ENCODE measurements at regions of chr12 and their contacts with region 1.

Region 1: GRCh38 chr12:11202811-11203210 is 16.1 kb upstream of the TAS2R42 start:
- DNase-seq: no peak
- ATAC-seq: no peak
- H3K4me3 ChIP-seq: no peak overlapping the region
- H3K4me3 Mint-ChIP-seq: no peak overlapping the region
- H3K27ac ChIP-seq: no peak overlapping the region
- H3K27ac Mint-ChIP-seq: no peak overlapping the region
- H3K4me1 ChIP-seq: no peaks in the 10 kb centered on the region
- H3K4me1 Mint-ChIP-seq: peaks cover 0 to 3% (median 0%) of the 10 kb centered on the region in 7 donors
- H3K27me3 ChIP-seq: no peaks in the 10 kb centered on the region
- H3K27me3 Mint-ChIP-seq: peaks cover 0 to 10% (median 0%) of the 10 kb centered on the region in 5 donors

Region 2: DNA sequence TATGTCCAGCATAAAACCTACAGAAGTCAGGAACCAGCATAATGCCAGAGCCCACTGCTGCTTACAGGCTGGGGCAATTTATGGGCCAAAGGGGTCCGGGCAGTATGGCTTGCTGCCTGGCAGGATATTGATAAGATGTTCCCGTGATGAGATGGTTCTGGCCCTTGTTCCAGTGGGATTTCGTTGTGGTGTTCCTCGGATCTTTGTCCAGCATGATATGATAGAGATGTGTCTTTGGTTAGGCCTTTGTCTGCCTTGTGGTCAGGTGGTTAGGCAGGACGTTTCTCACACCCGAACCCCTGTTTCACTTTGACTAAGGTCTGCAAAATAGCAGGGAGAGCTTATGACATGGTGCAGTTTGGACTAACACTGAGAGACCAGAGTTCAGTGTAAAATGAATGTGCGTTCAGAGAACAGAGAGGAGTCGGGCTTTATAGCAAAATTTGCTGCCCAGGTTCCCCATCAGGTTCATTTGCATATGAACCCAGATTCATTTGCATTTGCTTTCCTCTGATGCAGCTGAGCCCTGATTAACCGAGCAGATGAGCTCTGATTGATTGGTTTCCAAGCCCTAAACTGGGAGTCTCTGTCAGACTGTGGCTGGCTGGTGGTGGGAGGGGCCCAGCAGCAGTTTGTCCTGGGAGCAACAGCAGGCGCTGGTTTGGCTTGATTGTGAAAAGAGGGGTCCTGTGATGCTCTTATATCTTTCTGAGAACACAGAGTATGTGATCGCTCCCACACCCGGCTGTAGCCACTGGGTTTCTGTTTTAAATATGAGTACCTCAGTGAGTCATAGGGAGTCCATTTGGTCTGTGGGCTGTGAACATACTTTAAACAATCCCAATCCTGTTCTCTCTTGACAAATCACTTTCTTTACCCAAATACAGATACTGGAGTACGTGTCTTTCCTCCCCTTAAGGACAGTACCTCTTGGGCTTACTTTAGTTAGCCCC is 1838.3 kb before region 1 on chr12:
- CTCF ChIA-PET with region 1: no interaction called
- POLR2A ChIA-PET with region 1: no interaction called
- intact Hi-C with region 1: no loop called
- DNase-seq: peak in 1 of 9 donors; percentile 58
- ATAC-seq: peak; percentile 54
- H3K4me3 ChIP-seq: no peak overlapping the region
- H3K4me3 Mint-ChIP-seq: peak overlapping the region in 5 of 10 donors; percentile 1 to 66 (median 9)
- H3K27ac ChIP-seq: no peak overlapping the region
- H3K27ac Mint-ChIP-seq: peak overlapping the region in 1 of 9 donors; percentile 64
- H3K4me1 ChIP-seq: peaks cover 0 to 8% of the 10 kb centered on the region in 2 donors
- H3K4me1 Mint-ChIP-seq: peaks cover 18 to 36% (median 22%) of the 10 kb centered on the region in 7 donors
- H3K27me3 ChIP-seq: no peaks in the 10 kb centered on the region
- H3K27me3 Mint-ChIP-seq: peaks cover 0 to 18% (median 0%) of the 10 kb centered on the region in 5 donors

Region 3: GRCh38 chr12:10771132-10771733 is 431.6 kb before region 1 on chr12:
- CTCF ChIA-PET with region 1: interaction called, 37 read pairs
- POLR2A ChIA-PET with region 1: no interaction called
- intact Hi-C with region 1: loop called in 1 of 2 experiments (anchors 1 kb)
- DNase-seq: peak in 7 of 9 donors; percentile 9 to 56 (median 45)
- ATAC-seq: peak; percentile 63
- H3K4me3 ChIP-seq: no peak overlapping the region
- H3K4me3 Mint-ChIP-seq: no peak overlapping the region
- H3K27ac ChIP-seq: no peak overlapping the region
- H3K27ac Mint-ChIP-seq: no peak overlapping the region
- H3K4me1 ChIP-seq: no peaks in the 10 kb centered on the region
- H3K4me1 Mint-ChIP-seq: no peaks in the 10 kb centered on the region
- H3K27me3 ChIP-seq: no peaks in the 10 kb centered on the region
- H3K27me3 Mint-ChIP-seq: peaks cover 41 to 56% (median 52%) of the 10 kb centered on the region in 5 donors

Region 4: DNA sequence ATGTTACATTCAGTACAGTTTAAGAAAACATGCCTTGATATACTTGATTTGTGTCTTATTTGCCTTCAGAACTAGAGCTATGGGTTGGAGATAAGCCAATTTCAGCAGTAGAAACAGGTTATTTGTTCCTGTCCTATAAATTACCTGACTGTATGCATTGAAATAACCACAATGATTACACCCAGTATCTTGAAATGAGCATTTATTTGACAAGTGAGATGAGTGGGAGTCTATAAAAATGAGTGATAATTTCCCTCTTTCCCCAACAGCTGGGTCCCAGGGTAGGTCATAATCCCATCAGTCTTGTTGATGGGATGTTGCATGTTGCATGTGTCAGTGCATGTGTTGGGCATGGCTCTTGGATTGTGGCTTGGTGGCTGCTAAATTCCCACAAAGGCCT is 19.8 kb before region 1 on chr12:
- CTCF ChIA-PET with region 1: no interaction called
- POLR2A ChIA-PET with region 1: no interaction called
- intact Hi-C with region 1: no loop called
- DNase-seq: no peak
- ATAC-seq: no peak
- H3K4me3 ChIP-seq: no peak overlapping the region
- H3K4me3 Mint-ChIP-seq: no peak overlapping the region
- H3K27ac ChIP-seq: no peak overlapping the region
- H3K27ac Mint-ChIP-seq: no peak overlapping the region
- H3K4me1 ChIP-seq: no peaks in the 10 kb centered on the region
- H3K4me1 Mint-ChIP-seq: peaks cover 0 to 6% (median 0%) of the 10 kb centered on the region in 7 donors
- H3K27me3 ChIP-seq: no peaks in the 10 kb centered on the region
- H3K27me3 Mint-ChIP-seq: peaks cover 0 to 5% (median 0%) of the 10 kb centered on the region in 5 donors

Region 5: GRCh38 chr12:11344500-11344899 is 141.7 kb after region 1 on chr12:
- CTCF ChIA-PET with region 1: no interaction called
- POLR2A ChIA-PET with region 1: no interaction called
- intact Hi-C with region 1: no loop called
- DNase-seq: no peak
- ATAC-seq: no peak
- H3K4me3 ChIP-seq: no peak overlapping the region
- H3K4me3 Mint-ChIP-seq: no peak overlapping the region
- H3K27ac ChIP-seq: no peak overlapping the region
- H3K27ac Mint-ChIP-seq: no peak overlapping the region
- H3K4me1 ChIP-seq: no peaks in the 10 kb centered on the region
- H3K4me1 Mint-ChIP-seq: no peaks in the 10 kb centered on the region
- H3K27me3 ChIP-seq: no peaks in the 10 kb centered on the region
- H3K27me3 Mint-ChIP-seq: no peaks in the 10 kb centered on the region

Measured in naive thymus-derived CD4-positive, alpha-beta T cell (primary cell).